Activated naive CD4-positive, alpha-beta T cell treated with anti-CD3 and anti-CD28 coated beads for 36 hours (primary cell): ENCODE measurements at regions of chr3 and their contacts with region 1.

Region 1: DNA sequence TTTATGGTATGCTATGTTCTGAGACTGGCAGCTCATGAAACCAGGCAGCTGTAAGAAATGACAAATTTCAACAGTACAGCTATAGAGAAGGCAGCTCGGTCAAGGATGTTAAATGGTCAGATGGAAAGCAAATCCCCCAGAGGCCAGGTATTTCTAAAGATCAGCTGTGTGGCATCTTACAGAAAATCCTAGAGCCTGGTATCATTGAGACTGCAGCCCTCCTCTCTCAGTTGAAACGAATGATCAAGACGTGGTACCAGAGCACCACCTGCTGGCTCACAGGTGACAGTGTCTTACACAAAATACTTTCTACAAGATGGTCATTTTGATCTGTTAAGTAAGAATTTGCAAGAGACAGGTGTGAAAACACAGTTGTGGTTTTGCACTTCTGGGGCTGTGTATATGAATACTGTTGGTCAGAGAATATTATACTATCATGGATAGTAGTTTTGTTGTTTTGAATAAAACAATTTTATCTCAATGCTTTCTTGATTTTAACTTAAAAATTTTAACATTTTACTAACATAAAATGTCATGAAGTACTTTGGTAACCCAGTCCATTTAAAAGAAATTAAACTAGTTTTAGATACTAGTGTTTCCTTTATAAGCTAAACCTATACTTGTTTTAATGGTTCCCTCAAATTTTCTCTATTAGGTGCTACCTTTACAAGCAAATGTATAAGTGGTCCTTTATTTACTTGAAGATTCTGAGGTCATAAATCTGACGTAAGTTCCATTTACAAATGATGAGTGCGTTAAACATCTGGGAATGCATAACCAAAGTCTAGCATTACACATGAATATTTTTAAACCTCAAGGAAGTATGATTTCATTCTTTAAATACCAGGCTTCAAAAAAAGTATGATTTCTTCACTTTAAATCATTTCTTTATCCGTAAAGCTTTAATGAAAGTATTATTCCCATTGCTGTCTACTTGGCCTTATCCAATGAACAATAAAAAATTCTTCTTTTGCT is 121.8 kb downstream of the PDZRN3 start:
- DNase-seq: peak; percentile 76
- H3K4me3 Mint-ChIP-seq: no peak overlapping the region
- H3K27ac Mint-ChIP-seq: no peak overlapping the region
- H3K4me1 Mint-ChIP-seq: no peaks in the 10 kb centered on the region
- H3K27me3 Mint-ChIP-seq: peaks cover 8% of the 10 kb centered on the region

Region 2: GRCh38 chr3:72938471-72939265 is 564.2 kb before region 1 on chr3:
- CTCF ChIA-PET with region 1: no interaction called
- intact Hi-C with region 1: loop called (anchors 5 kb)
- DNase-seq: peak; percentile 26
- H3K4me3 Mint-ChIP-seq: no peak overlapping the region
- H3K27ac Mint-ChIP-seq: no peak overlapping the region
- H3K4me1 Mint-ChIP-seq: no peaks in the 10 kb centered on the region
- H3K27me3 Mint-ChIP-seq: no peaks in the 10 kb centered on the region

Region 3: GRCh38 chr3:73100741-73101559 is 401.9 kb before region 1 on chr3:
- CTCF ChIA-PET with region 1: interaction called, 38 read pairs
- intact Hi-C with region 1: loop called (anchors 1 kb)
- DNase-seq: peak; percentile 90
- H3K4me3 Mint-ChIP-seq: no peak overlapping the region
- H3K27ac Mint-ChIP-seq: no peak overlapping the region
- H3K4me1 Mint-ChIP-seq: no peaks in the 10 kb centered on the region
- H3K27me3 Mint-ChIP-seq: no peaks in the 10 kb centered on the region

Region 4: GRCh38 chr3:73192035-73192738 is 310.7 kb before region 1 on chr3:
- CTCF ChIA-PET with region 1: interaction called, 6 read pairs
- intact Hi-C with region 1: loop called (anchors 10 kb)
- DNase-seq: peak; percentile 5
- H3K4me3 Mint-ChIP-seq: no peak overlapping the region
- H3K27ac Mint-ChIP-seq: no peak overlapping the region
- H3K4me1 Mint-ChIP-seq: no peaks in the 10 kb centered on the region
- H3K27me3 Mint-ChIP-seq: peaks cover 6% of the 10 kb centered on the region

Region 5: DNA sequence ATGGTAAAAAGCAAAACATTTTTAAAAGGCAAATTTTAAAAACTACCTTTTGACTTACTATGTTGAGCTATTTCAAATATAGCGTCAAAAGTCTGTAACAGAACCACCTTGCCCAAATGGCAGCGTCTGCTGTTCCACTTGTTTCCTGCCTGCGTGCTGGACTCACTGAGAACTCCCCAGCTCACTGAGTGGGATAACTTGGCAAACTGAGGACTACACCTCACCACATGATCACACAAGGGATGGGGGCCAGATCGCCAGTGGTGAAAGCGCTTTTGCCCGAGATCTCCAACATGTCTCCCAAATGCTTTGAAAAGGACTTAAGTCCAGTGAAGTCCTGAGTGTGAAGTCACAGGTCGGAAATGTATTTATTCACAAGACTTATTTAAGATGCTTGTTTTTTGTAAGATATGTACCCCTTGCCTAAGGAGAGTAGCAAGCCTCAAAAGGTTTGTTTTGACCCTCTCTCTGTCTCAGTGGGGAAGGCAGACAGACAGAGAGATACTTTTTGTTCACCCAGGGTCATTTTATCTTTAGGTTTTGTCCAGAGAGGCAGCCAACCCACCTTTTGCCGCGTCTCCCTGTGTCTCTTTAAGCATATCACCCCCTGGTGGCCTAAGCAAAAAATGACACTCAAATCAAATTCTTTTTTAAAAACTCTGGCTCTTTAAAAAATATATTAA is 70.7 kb before region 1 on chr3:
- CTCF ChIA-PET with region 1: no interaction called
- intact Hi-C with region 1: loop called (anchors 1 kb)
- DNase-seq: peak; percentile 16
- H3K4me3 Mint-ChIP-seq: no peak overlapping the region
- H3K27ac Mint-ChIP-seq: no peak overlapping the region
- H3K4me1 Mint-ChIP-seq: no peaks in the 10 kb centered on the region
- H3K27me3 Mint-ChIP-seq: peaks cover 11% of the 10 kb centered on the region

Region 6: GRCh38 chr3:73453666-73454065 is 49.2 kb before region 1 on chr3:
- CTCF ChIA-PET with region 1: no interaction called
- intact Hi-C with region 1: loop called (anchors 2 kb)
- DNase-seq: no peak
- H3K4me3 Mint-ChIP-seq: no peak overlapping the region
- H3K27ac Mint-ChIP-seq: no peak overlapping the region
- H3K4me1 Mint-ChIP-seq: no peaks in the 10 kb centered on the region
- H3K27me3 Mint-ChIP-seq: no peaks in the 10 kb centered on the region

Region 7: GRCh38 chr3:73786321-73786807 is 283.5 kb after region 1 on chr3:
- CTCF ChIA-PET with region 1: no interaction called
- intact Hi-C with region 1: no loop called
- DNase-seq: no peak
- H3K4me3 Mint-ChIP-seq: no peak overlapping the region
- H3K27ac Mint-ChIP-seq: no peak overlapping the region
- H3K4me1 Mint-ChIP-seq: no peaks in the 10 kb centered on the region
- H3K27me3 Mint-ChIP-seq: no peaks in the 10 kb centered on the region

Region 8: GRCh38 chr3:75001330-75001729 is 1498.4 kb after region 1 on chr3:
- CTCF ChIA-PET with region 1: no interaction called
- intact Hi-C with region 1: loop called (anchors 10 kb)
- DNase-seq: no peak
- H3K4me3 Mint-ChIP-seq: no peak overlapping the region
- H3K27ac Mint-ChIP-seq: no peak overlapping the region
- H3K4me1 Mint-ChIP-seq: no peaks in the 10 kb centered on the region
- H3K27me3 Mint-ChIP-seq: no peaks in the 10 kb centered on the region